Activated naive CD8-positive, alpha-beta T cell treated with anti-CD3 and anti-CD28 coated beads, Interleukin-2, amount 10 ng/mL, durations not matched to agents 7 days and 5 days (primary cell): ENCODE measurements at regions of chr19 and their contacts with region 1.

Region 1: DNA sequence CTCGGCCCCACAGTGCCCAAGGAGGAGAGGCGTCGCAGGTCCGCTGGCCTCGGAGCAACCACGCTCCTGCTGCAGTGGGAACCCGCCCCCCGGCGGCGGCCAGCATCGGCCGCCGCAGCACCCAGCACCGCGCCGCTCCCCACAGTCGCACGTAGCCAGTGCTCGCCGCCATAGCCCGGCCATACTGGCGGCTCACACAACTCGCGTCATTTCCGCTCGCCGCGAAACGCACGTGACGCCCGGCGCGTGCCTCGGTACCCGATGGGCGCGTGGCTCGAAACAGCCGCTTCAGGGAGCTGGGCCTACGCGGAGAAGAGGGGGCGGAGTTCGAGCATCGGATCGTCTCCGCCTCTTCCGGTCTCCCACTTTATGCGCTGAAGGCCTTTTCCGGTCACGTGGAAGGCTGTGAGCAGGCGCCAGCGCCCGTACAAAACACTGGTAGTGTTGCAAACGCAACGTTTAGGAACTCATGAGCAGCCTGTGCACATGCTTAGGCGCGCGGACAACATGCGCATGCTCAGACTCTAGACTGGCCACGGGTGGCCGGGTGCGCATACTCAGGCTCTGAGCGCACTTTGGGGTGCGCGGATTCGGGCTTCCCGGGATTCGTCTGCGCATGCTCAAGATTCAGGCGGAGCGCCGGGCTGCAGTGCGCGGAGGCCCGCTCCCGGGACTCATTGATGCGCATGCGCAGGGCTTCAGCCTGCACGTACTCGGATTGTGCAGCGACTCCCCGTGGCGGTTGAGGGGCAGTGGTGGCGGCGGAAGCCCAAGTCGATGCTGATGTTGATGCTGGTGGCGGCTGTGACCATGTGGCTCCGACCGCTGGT is at the starts of genes CATSPERD and LONP1:
- DNase-seq: peak; percentile 98
- ATAC-seq: peak; percentile 86
- H3K4me3 Mint-ChIP-seq: peak within 1 kb of the TSS; percentile 97
- H3K27ac Mint-ChIP-seq: peak within 1 kb of the TSS; percentile 95
- H3K4me1 Mint-ChIP-seq: peaks cover 20% of the 10 kb centered on the region
- H3K27me3 Mint-ChIP-seq: peaks cover 3% of the 10 kb centered on the region
- total RNA-seq, gene CATSPERD: not detected
- total RNA-seq, gene LONP1: 112 to 120 TPM

Region 2: GRCh38 chr19:5622463-5623396 is 97.4 kb before region 1 on chr19 and contains the starts of genes SAFB and SAFB2:
- POLR2A ChIA-PET with region 1: interaction called, 18 read pairs
- DNase-seq: peak; percentile 99
- ATAC-seq: peak; percentile 95
- H3K4me3 Mint-ChIP-seq: peak within 1 kb of the TSS; percentile 99
- H3K27ac Mint-ChIP-seq: peak within 1 kb of the TSS; percentile 99
- H3K4me1 Mint-ChIP-seq: peaks cover 47% of the 10 kb centered on the region
- H3K27me3 Mint-ChIP-seq: no peaks in the 10 kb centered on the region
- total RNA-seq, gene SAFB: 144 to 147 TPM
- total RNA-seq, gene SAFB2: 131 to 140 TPM

Region 3: GRCh38 chr19:5690125-5690954 is 29.8 kb before region 1 on chr19 and contains the start of gene RPL36:
- POLR2A ChIA-PET with region 1: interaction called, 60 read pairs
- DNase-seq: peak; percentile 100
- ATAC-seq: peak; percentile 69
- H3K4me3 Mint-ChIP-seq: peak within 1 kb of the TSS; percentile 98
- H3K27ac Mint-ChIP-seq: peak within 1 kb of the TSS; percentile 95
- H3K4me1 Mint-ChIP-seq: peaks cover 16% of the 10 kb centered on the region
- H3K27me3 Mint-ChIP-seq: no peaks in the 10 kb centered on the region
- total RNA-seq, gene RPL36: 1,119 to 1,147 TPM

Region 4: GRCh38 chr19:5707576-5708575 is 12.3 kb before region 1 on chr19:
- POLR2A ChIA-PET with region 1: interaction called, 18 read pairs
- DNase-seq: no peak
- ATAC-seq: no peak
- H3K4me3 Mint-ChIP-seq: no peak overlapping the region
- H3K27ac Mint-ChIP-seq: no peak overlapping the region
- H3K4me1 Mint-ChIP-seq: no peaks in the 10 kb centered on the region
- H3K27me3 Mint-ChIP-seq: no peaks in the 10 kb centered on the region

Region 5: GRCh38 chr19:5790573-5791520 is 70.7 kb after region 1 on chr19 and contains the start of gene DUS3L:
- POLR2A ChIA-PET with region 1: interaction called, 15 read pairs
- DNase-seq: peak; percentile 96
- ATAC-seq: peak; percentile 97
- H3K4me3 Mint-ChIP-seq: peak within 1 kb of the TSS; percentile 94
- H3K27ac Mint-ChIP-seq: peak within 1 kb of the TSS; percentile 100
- H3K4me1 Mint-ChIP-seq: peaks cover 5% of the 10 kb centered on the region
- H3K27me3 Mint-ChIP-seq: no peaks in the 10 kb centered on the region
- total RNA-seq, gene DUS3L: 61.0 to 62.1 TPM

Region 6: GRCh38 chr19:5904352-5905113 is 184.4 kb after region 1 on chr19 and contains the start of gene VMAC:
- POLR2A ChIA-PET with region 1: interaction called, 18 read pairs
- DNase-seq: peak; percentile 100
- ATAC-seq: peak; percentile 86
- H3K4me3 Mint-ChIP-seq: peak within 1 kb of the TSS; percentile 96
- H3K27ac Mint-ChIP-seq: peak within 1 kb of the TSS; percentile 99
- H3K4me1 Mint-ChIP-seq: peaks cover 21% of the 10 kb centered on the region
- H3K27me3 Mint-ChIP-seq: no peaks in the 10 kb centered on the region
- total RNA-seq, gene VMAC: 15.6 to 17.5 TPM